A673 (cell line): ENCODE measurements at regions of chr2 and their contacts with region 1.

Region 1: GRCh38 chr2:128321784-128322714 is 3.4 kb upstream of the HS6ST1 start:
- DNase-seq: peak; percentile 92
- H3K4me3 ChIP-seq: peak overlapping the region; percentile 64
- H3K27ac ChIP-seq: peak overlapping the region; percentile 96
- H3K4me1 ChIP-seq: peaks cover 38% of the 10 kb centered on the region
- H3K27me3 ChIP-seq: no peaks in the 10 kb centered on the region
- CTCF ChIP-seq: peak; percentile 70

Region 2: GRCh38 chr2:128069769-128070168 is 252.3 kb before region 1 on chr2:
- CTCF ChIA-PET with region 1: no interaction called
- POLR2A ChIA-PET with region 1: no interaction called
- intact Hi-C with region 1: loop called (anchors 10 kb)
- DNase-seq: no peak
- H3K4me3 ChIP-seq: no peak overlapping the region
- H3K27ac ChIP-seq: no peak overlapping the region
- H3K4me1 ChIP-seq: no peaks in the 10 kb centered on the region
- H3K27me3 ChIP-seq: no peaks in the 10 kb centered on the region
- CTCF ChIP-seq: no peak

Region 3: DNA sequence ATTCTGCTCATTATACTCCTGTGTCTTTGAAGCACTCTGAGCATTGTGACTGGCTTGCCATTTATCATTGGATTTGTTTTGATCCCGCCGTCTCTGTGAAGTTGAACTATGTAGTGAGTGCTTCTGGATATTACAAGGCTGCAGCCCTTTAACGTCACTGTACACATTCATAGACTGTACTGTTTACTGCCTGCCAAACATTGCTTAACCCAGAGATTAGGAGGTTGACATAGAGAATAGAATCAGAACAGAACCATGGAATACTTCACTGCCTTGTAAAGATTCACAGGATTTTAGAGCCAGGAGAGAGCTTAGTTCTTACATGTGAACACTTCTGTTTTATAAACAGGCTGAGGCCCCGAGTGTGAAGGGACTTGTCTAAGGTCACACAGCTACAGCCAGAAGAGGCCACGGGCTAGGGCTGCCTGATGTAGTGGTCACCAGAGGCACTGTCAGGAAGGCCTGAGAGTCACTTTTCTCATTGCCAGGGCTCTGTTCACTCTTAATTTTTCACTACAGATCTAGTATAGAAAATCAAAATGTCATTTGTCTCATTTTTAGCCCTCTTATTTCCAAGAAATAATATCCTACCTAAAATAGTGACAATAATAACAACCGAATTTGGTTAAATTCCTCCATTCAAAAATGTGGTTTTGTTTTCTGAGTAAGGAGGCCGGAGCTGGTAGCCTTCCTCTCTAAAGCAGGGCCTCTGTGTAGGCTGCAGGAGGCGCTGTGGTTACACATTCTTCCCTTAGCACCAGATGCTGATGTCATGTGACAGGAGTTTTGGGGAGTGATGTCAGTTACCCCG is 143.2 kb before region 1 on chr2:
- CTCF ChIA-PET with region 1: no interaction called
- POLR2A ChIA-PET with region 1: no interaction called
- intact Hi-C with region 1: loop called (anchors 10 kb)
- DNase-seq: peak; percentile 65
- H3K4me3 ChIP-seq: no peak overlapping the region
- H3K27ac ChIP-seq: no peak overlapping the region
- H3K4me1 ChIP-seq: no peaks in the 10 kb centered on the region
- H3K27me3 ChIP-seq: no peaks in the 10 kb centered on the region
- CTCF ChIP-seq: peak; percentile 91

Region 4: GRCh38 chr2:128531856-128532255 is 209.8 kb after region 1 on chr2:
- CTCF ChIA-PET with region 1: no interaction called
- POLR2A ChIA-PET with region 1: no interaction called
- intact Hi-C with region 1: loop called (anchors 5 kb)
- DNase-seq: peak; percentile 21
- H3K4me3 ChIP-seq: no peak overlapping the region
- H3K27ac ChIP-seq: no peak overlapping the region
- H3K4me1 ChIP-seq: no peaks in the 10 kb centered on the region
- H3K27me3 ChIP-seq: no peaks in the 10 kb centered on the region
- CTCF ChIP-seq: peak; percentile 61

Region 5: GRCh38 chr2:128635361-128635900 is 313.4 kb after region 1 on chr2:
- CTCF ChIA-PET with region 1: interaction called, 3 read pairs
- POLR2A ChIA-PET with region 1: no interaction called
- intact Hi-C with region 1: loop called (anchors 1 kb)
- DNase-seq: peak; percentile 83
- H3K4me3 ChIP-seq: no peak overlapping the region
- H3K27ac ChIP-seq: peak overlapping the region; percentile 74
- H3K4me1 ChIP-seq: peaks cover 49% of the 10 kb centered on the region
- H3K27me3 ChIP-seq: no peaks in the 10 kb centered on the region
- CTCF ChIP-seq: no peak

Region 6: DNA sequence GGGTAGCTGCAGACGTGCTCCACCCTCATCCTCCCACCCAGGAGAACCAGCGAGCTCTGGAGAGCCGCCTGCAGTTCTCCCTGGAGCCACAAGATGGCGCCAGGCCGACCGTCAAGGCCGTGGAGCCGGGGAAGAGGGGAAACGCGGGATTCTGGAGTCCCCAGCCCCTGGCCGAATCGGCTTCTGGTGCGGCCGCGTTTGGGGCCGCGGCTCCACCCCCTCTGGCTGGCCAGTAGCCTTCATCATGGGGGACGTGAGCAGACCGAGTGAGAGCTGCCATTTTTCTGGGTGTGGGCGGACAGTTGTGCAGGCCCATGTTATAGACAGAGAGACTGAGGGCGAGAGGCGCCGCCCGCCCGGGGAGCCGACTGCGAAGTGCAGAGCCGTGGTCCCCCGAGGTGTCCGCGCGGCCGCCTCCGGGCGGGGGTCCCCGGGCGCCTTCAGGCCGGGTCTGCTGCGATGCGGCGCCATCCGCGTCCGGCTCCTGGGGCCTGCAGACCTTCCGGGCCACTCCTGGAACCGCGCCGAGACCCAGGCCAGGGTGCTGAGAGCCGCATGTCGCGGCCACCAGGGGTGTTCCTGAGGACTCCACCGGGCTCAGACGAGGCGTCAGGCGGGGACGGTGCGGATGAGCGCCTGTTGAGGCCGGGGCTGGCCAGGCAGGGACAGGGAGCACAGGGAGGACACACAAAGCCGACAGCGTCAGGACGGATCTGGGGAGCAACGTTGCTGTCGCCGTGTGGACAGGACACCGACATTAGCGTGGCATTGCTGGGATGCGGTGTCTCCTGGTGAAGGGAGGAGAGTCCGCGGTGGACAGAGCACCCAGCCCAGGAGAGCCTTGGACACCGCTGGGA is 414.9 kb after region 1 on chr2:
- CTCF ChIA-PET with region 1: no interaction called
- POLR2A ChIA-PET with region 1: no interaction called
- intact Hi-C with region 1: loop called (anchors 5 kb)
- DNase-seq: peak; percentile 90
- H3K4me3 ChIP-seq: no peak overlapping the region
- H3K27ac ChIP-seq: no peak overlapping the region
- H3K4me1 ChIP-seq: peaks cover 32% of the 10 kb centered on the region
- H3K27me3 ChIP-seq: no peaks in the 10 kb centered on the region
- CTCF ChIP-seq: peak; percentile 99